CD8-positive, alpha-beta memory T cell (primary cell): ENCODE measurements at regions of chr19 and their contacts with region 1.

Region 1: DNA sequence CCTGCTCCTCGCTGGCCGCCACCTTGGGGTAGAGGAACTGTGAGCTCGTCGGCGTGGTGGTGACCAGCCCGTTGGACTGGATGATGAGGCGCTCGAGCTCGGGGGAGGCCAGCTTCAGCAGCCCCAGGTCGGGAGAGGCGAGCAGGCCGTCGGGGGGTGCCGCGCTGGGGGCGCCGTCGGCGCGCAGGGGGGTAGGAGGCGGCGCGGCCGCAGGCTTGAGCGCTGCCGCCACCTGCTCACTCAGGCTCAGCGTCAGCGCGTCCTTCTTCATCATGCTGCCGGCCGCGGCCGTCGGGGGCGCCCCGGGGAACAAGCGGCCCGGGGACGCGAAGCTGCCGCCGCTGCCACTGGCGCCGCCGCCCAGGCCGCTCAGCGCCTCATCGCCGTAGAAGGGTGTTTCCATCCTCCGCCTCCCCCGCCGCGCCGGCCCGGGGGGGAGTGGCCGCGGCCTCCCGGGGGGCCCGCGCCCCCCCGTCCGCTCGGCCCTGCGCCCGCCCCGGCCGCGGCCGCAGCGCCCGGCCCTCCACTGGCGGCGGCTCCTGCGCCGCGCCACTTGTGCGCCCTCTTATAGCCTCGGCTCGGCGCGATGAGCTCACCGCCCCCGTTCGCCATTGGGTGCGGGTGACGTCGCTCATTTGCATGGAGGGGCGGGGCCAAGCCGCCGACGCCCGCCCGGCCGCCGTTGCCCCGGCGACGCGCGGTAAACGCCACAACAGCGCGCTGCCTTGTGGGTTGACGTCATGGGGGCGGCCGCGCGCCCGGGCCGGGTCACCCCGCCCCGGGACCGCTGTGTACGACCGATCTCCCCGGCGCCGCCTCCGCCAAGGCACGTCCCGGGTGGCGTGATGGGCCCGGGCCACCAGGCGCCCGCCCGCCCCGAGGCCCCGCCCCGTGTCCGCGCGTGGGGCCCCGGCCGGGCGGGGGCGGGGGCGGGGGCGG is at the start of gene JUND:
- DNase-seq: peak; percentile 97 to 99 (median 99)
- H3K4me3 ChIP-seq: peak within 1 kb of the TSS; percentile 98
- H3K4me3 Mint-ChIP-seq: peak within 1 kb of the TSS; percentile 89 to 98 (median 98)
- H3K27ac ChIP-seq: peak within 1 kb of the TSS; percentile 100
- H3K27ac Mint-ChIP-seq: peak within 1 kb of the TSS; percentile 95 to 99 (median 98)
- H3K4me1 ChIP-seq: peaks cover 41% of the 10 kb centered on the region
- H3K4me1 Mint-ChIP-seq: peaks cover 38 to 56% (median 49%) of the 10 kb centered on the region in 3 donors
- H3K27me3 ChIP-seq: no peaks in the 10 kb centered on the region
- H3K27me3 Mint-ChIP-seq: peaks cover 0 to 42% of the 10 kb centered on the region in 2 donors
- total RNA-seq, gene JUND: 300 to 327 TPM

Region 2: DNA sequence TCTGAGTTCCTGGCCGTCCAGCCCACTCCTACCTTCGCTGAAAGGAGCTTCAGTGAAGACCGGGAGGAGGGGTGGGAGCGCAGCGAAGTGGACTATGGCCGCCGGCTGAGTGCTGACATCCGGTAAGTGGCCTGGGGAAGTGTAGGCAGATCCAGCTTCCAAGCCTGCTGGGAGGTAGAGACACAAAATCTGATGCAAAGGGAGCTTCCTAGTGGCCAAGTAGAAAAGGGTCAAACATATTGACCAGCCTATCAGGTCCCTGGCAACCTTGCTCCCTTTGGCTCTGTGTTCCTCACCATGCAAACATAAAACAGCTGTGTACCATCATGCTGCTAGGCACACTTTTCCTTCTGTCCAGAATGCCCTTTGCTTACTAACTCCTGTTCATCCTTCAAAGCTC is 139.5 kb before region 1 on chr19:
- CTCF ChIA-PET with region 1: interaction called, 4 read pairs
- POLR2A ChIA-PET with region 1: interaction called, 13 read pairs
- DNase-seq: no peak
- H3K4me3 ChIP-seq: no peak overlapping the region
- H3K4me3 Mint-ChIP-seq: no peak overlapping the region
- H3K27ac ChIP-seq: no peak overlapping the region
- H3K27ac Mint-ChIP-seq: no peak overlapping the region
- H3K4me1 ChIP-seq: no peaks in the 10 kb centered on the region
- H3K4me1 Mint-ChIP-seq: peaks cover 0 to 2% (median 0%) of the 10 kb centered on the region in 3 donors
- H3K27me3 ChIP-seq: no peaks in the 10 kb centered on the region
- H3K27me3 Mint-ChIP-seq: no peaks in the 10 kb centered on the region

Region 3: GRCh38 chr19:18269070-18269723 is 12.2 kb before region 1 on chr19:
- CTCF ChIA-PET with region 1: interaction called, 23 read pairs
- POLR2A ChIA-PET with region 1: interaction called, 4 read pairs
- DNase-seq: no peak
- H3K4me3 ChIP-seq: no peak overlapping the region
- H3K4me3 Mint-ChIP-seq: peak overlapping the region in 1 of 7 donors; percentile 52
- H3K27ac ChIP-seq: no peak overlapping the region
- H3K27ac Mint-ChIP-seq: peak overlapping the region in 2 of 8 donors; percentile 51 to 99
- H3K4me1 ChIP-seq: peaks cover 4% of the 10 kb centered on the region
- H3K4me1 Mint-ChIP-seq: peaks cover 9 to 20% (median 13%) of the 10 kb centered on the region in 3 donors
- H3K27me3 ChIP-seq: no peaks in the 10 kb centered on the region
- H3K27me3 Mint-ChIP-seq: peaks cover 0 to 9% of the 10 kb centered on the region in 2 donors

Region 4: DNA sequence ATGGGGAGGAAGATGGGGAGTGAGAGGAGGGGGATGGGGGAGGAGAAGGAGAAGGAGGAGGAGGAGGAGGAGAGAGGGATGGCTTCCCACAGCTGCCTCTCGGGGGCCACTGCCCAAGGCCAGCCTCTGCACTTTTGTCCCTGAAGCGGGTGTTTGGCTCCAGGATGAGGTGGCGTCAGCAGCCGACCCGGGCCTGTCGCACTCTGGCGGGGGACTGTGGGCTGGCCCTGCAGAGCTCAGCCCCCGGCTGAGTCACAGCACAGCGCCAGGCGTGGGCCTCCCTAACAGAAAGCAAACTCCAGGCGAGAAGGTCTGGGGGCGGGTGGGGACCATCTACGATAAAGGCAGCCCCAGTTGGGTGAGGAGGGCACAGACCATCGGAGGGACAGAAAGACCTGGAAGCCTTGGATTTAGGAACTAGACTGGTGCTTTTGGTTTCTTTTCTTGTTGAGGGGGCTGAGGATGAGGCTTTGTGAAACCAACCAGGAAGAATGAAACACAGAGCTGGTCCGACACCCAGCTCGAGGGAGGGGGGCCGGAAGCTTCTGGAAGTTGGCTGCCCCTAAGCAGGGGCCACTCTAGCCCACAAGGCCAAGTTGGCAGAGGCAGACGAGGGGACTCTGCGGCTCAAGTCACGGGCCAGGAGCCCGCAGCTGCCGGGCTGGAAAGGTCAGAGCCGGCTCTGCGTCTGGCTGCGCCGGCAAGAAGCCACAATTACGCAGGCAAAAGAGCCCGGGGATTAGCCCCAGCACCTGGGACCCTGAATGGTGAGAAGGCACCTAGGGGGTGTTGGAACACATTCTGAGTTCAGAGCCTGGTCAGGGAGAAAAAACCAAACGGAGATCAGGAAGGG is 23.3 kb after region 1 on chr19:
- CTCF ChIA-PET with region 1: interaction called, 72 read pairs
- POLR2A ChIA-PET with region 1: interaction called, 283 read pairs
- DNase-seq: peak; percentile 74 to 93 (median 78)
- H3K4me3 ChIP-seq: peak overlapping the region; percentile 81
- H3K4me3 Mint-ChIP-seq: peak overlapping the region; percentile 89 to 96 (median 92)
- H3K27ac ChIP-seq: peak overlapping the region; percentile 94
- H3K27ac Mint-ChIP-seq: peak overlapping the region; percentile 94 to 99 (median 99)
- H3K4me1 ChIP-seq: peaks cover 52% of the 10 kb centered on the region
- H3K4me1 Mint-ChIP-seq: peaks cover 36 to 55% (median 40%) of the 10 kb centered on the region in 3 donors
- H3K27me3 ChIP-seq: no peaks in the 10 kb centered on the region
- H3K27me3 Mint-ChIP-seq: peaks cover 0 to 1% of the 10 kb centered on the region in 2 donors

Region 5: GRCh38 chr19:18328340-18329034 is 47.1 kb after region 1 on chr19:
- CTCF ChIA-PET with region 1: interaction called, 436 read pairs
- POLR2A ChIA-PET with region 1: interaction called, 118 read pairs
- DNase-seq: peak; percentile 73 to 92 (median 86)
- H3K4me3 ChIP-seq: peak overlapping the region; percentile 50
- H3K4me3 Mint-ChIP-seq: peak overlapping the region; percentile 60 to 79 (median 69)
- H3K27ac ChIP-seq: peak overlapping the region; percentile 1
- H3K27ac Mint-ChIP-seq: peak overlapping the region in 7 of 8 donors; percentile 6 to 61 (median 42)
- H3K4me1 ChIP-seq: peaks cover 16% of the 10 kb centered on the region
- H3K4me1 Mint-ChIP-seq: peaks cover 15 to 19% (median 16%) of the 10 kb centered on the region in 3 donors
- H3K27me3 ChIP-seq: no peaks in the 10 kb centered on the region
- H3K27me3 Mint-ChIP-seq: peaks cover 0 to 3% of the 10 kb centered on the region in 2 donors

Region 6: DNA sequence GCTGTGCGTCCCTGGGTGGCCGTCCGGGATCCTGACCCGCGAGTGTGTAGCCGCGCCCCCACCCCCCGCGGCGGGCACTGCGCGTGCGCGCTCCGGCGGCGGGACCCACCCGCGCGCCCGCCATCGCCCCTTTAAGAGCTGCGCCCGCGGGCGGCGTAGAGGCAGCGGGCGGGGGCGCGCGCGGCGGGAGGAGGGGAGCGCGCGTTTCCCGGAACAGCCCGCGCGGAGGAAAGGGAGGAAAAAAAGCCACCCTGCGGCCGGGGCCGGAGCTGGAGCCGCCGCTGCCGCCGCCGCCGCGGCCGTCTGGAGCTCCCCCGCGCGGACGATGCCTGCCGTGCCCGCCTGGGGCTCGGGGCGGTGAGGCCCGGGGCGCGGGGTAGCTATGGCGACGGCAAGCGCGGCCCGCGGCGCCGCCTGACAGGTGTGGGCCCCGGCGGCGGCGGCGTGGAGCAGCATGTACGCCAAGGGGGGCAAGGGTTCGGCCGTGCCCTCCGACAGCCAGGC is 137.9 kb after region 1 on chr19 and contains the start of gene SSBP4:
- CTCF ChIA-PET with region 1: interaction called, 64 read pairs
- POLR2A ChIA-PET with region 1: interaction called, 97 read pairs
- DNase-seq: peak; percentile 59 to 83 (median 75)
- H3K4me3 ChIP-seq: peak within 1 kb of the TSS; percentile 81
- H3K4me3 Mint-ChIP-seq: peak within 1 kb of the TSS; percentile 90 to 98 (median 94)
- H3K27ac ChIP-seq: peak within 1 kb of the TSS; percentile 83
- H3K27ac Mint-ChIP-seq: peak within 1 kb of the TSS; percentile 94 to 100 (median 98)
- H3K4me1 ChIP-seq: peaks cover 86% of the 10 kb centered on the region
- H3K4me1 Mint-ChIP-seq: peaks cover 70 to 88% (median 87%) of the 10 kb centered on the region in 3 donors
- H3K27me3 ChIP-seq: peaks cover 4% of the 10 kb centered on the region
- H3K27me3 Mint-ChIP-seq: peaks cover 0 to 6% of the 10 kb centered on the region in 2 donors
- total RNA-seq, gene SSBP4: 111 to 131 TPM